IMR-90 (cell line): ENCODE measurements at regions of chr4 and their contacts with region 1.

Region 1: DNA sequence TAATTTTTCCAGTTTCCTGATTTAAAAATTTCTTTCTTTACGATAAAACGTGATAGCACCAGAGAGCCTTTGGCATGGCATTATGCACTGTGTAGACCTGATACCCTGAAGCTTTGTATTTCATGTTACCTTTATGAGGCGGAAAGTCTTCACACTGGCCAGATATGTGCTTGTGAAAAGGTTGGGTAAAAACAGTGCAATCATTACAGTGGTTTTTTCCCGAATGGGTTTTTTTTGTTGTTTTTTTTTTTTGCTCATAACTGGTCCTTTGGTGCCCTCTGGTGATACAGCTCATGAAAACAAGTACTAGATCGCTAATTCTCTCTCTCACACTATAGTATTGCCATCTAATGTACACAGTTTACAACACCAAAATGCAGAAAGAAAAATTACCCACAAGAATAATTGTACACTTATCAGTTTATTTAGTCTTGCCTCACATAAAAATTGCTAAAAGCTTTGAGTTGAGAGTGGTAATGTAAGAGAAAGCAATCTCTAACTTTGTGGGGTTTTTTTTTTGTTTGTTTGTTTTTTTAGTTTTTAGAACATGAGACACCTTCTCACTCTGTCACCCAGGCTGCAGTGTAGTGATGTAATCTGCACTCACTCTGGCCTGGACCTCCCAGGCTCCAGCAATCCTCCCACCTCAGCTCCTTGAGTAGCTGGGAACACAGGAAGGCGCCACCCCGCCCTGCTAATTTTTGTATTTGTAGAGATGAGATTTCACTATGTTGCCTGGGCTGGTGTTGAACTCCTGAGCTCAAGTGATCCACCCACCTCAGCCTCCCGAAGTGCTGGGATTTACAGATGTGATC is 21.3 kb downstream of the SPCS3 start:
- DNase-seq: peak; percentile 66
- ATAC-seq: peak; percentile 62
- H3K4me3 ChIP-seq: no peak overlapping the region
- H3K27ac ChIP-seq: no peak overlapping the region
- H3K4me1 ChIP-seq: peaks cover 7% of the 10 kb centered on the region
- H3K27me3 ChIP-seq: no peaks in the 10 kb centered on the region
- CTCF ChIP-seq: peak; percentile 76
- POLR2A ChIP-seq: no peak
- RAD21 ChIP-seq: peak; percentile 89

Region 2: DNA sequence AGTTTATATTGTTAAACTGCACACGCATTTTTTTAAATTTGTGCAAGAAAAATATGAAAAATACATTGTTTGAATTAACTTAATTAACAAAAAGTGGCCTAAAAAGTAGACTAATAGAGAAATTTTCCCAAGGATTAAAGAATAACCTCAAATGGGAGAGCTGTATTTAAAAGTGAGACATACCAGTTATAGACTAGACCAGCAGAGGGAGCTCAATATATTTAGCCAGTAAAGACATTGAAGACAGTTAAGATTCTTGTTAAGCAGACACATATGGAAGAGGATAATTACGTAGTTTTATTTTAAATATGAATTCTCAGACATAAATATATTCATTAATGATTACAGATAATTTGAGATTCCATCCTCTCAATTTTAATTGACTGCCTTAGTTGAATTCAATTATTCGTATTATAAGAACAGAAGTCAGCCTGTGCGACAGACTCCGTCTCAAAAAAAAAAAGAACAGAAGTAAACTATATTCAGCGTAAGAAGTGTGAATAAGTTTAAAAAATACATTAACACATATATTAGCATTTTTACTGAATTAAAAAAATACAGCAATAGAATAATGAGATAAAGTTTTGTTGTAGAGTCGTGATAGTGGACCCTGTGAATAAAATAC is 1576.9 kb before region 1 on chr4:
- CTCF ChIA-PET with region 1: no interaction called
- POLR2A ChIA-PET with region 1: no interaction called
- dilution Hi-C with region 1: no loop called
- in situ Hi-C with region 1: loop called (anchors 25 kb)
- intact Hi-C with region 1: loop called (anchors 10 kb)
- DNase-seq: peak; percentile 40
- ATAC-seq: no peak
- H3K4me3 ChIP-seq: no peak overlapping the region
- H3K27ac ChIP-seq: no peak overlapping the region
- H3K4me1 ChIP-seq: no peaks in the 10 kb centered on the region
- H3K27me3 ChIP-seq: no peaks in the 10 kb centered on the region
- CTCF ChIP-seq: peak; percentile 61
- POLR2A ChIP-seq: no peak
- RAD21 ChIP-seq: peak; percentile 52

Region 3: DNA sequence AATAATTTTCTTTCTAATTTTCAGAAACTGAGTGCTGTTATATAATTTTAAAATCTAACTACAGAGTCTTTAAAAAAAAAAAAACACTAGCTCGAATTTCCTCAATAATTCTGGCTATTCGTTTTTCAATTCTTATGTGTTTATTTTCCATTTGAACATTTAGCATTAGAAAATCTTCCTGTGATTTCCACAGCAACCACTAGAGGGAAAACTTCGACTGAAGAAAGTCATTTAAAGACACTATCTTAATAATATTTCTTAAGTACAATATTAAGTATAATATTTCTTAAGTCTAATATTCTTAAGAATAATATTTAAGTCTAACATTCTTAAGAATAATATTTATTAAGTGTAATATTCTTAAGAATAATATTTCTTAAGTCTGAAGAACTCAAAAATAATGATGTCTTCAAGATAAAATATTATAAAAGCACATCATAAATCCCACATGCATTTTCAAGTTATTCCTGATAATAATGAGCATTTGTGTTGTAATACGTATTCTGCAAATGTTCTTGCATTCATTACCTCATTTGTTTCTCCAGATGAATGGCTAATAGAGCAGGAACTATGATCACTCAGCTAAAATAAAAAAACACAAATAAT is 393.9 kb before region 1 on chr4:
- CTCF ChIA-PET with region 1: interaction called, 4 read pairs
- POLR2A ChIA-PET with region 1: no interaction called
- dilution Hi-C with region 1: no loop called
- in situ Hi-C with region 1: loop called (anchors 5 kb)
- intact Hi-C with region 1: loop called (anchors 1 kb)
- DNase-seq: peak; percentile 43
- ATAC-seq: no peak
- H3K4me3 ChIP-seq: no peak overlapping the region
- H3K27ac ChIP-seq: no peak overlapping the region
- H3K4me1 ChIP-seq: no peaks in the 10 kb centered on the region
- H3K27me3 ChIP-seq: no peaks in the 10 kb centered on the region
- CTCF ChIP-seq: peak; percentile 64
- POLR2A ChIP-seq: no peak
- RAD21 ChIP-seq: peak; percentile 48

Region 4: GRCh38 chr4:176099314-176099713 is 241.8 kb before region 1 on chr4:
- CTCF ChIA-PET with region 1: no interaction called
- POLR2A ChIA-PET with region 1: no interaction called
- dilution Hi-C with region 1: no loop called
- in situ Hi-C with region 1: no loop called
- intact Hi-C with region 1: loop called (anchors 1 kb)
- DNase-seq: peak; percentile 0
- ATAC-seq: no peak
- H3K4me3 ChIP-seq: no peak overlapping the region
- H3K27ac ChIP-seq: no peak overlapping the region
- H3K4me1 ChIP-seq: no peaks in the 10 kb centered on the region
- H3K27me3 ChIP-seq: no peaks in the 10 kb centered on the region
- CTCF ChIP-seq: 0 out of 2 replicates have a peak, but pooled peaks have one; percentile 10
- POLR2A ChIP-seq: no peak
- RAD21 ChIP-seq: no peak

Region 5: DNA sequence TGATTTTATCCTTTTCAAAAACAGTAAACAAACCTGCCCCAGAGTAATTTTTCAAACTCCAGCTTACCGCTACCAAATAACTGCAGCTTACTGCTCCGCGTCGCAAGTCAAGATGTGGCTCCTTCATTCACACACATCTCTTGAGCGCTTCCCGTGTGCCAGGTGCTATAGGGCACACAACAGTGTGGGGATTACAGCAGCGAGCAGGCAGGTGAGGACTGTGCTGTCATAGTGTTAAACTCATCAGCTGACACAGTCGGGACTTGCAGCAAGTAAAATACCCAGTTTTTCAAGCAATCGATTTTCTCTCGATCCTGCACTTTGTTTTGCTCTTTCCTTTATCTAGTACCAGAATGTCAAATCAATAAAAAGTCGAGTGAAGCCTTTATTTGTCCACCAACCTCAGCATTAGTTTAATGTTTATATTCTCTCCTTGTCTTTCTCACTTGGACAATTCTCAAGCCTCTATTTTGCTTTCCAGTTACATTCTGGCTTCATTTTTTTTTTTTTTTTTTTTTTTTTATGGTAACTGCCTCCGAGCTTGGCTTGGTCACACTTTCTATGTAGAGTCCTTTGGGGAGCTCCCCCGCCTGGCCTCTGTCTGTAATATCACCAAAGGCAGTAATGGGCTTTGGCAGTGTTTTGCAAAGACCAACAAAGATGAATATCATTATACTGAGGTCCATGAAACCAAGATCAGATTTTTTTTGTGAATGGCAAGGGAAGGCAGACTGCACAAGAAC is 63.7 kb before region 1 on chr4:
- CTCF ChIA-PET with region 1: interaction called, 3 read pairs
- POLR2A ChIA-PET with region 1: no interaction called
- dilution Hi-C with region 1: no loop called
- in situ Hi-C with region 1: no loop called
- intact Hi-C with region 1: loop called (anchors 2 kb)
- DNase-seq: peak; percentile 71
- ATAC-seq: peak; percentile 92
- H3K4me3 ChIP-seq: no peak overlapping the region
- H3K27ac ChIP-seq: peak overlapping the region; percentile 28; the same call in 1 of the 2 replicates
- H3K4me1 ChIP-seq: peaks cover 5% of the 10 kb centered on the region
- H3K27me3 ChIP-seq: no peaks in the 10 kb centered on the region
- CTCF ChIP-seq: peak; percentile 74
- POLR2A ChIP-seq: no peak
- RAD21 ChIP-seq: peak; percentile 77

Region 6: GRCh38 chr4:177434626-177435025 is 1093.5 kb after region 1 on chr4:
- CTCF ChIA-PET with region 1: no interaction called
- POLR2A ChIA-PET with region 1: no interaction called
- dilution Hi-C with region 1: no loop called
- in situ Hi-C with region 1: no loop called
- intact Hi-C with region 1: no loop called
- DNase-seq: no peak
- ATAC-seq: no peak
- H3K4me3 ChIP-seq: no peak overlapping the region
- H3K27ac ChIP-seq: no peak overlapping the region
- H3K4me1 ChIP-seq: no peaks in the 10 kb centered on the region
- H3K27me3 ChIP-seq: no peaks in the 10 kb centered on the region
- CTCF ChIP-seq: no peak
- POLR2A ChIP-seq: no peak
- RAD21 ChIP-seq: no peak